Naive thymus-derived CD4-positive, alpha-beta T cell (primary cell): ENCODE measurements at regions of chr15 and their contacts with region 1.

Region 1: GRCh38 chr15:44219073-44219472 is 24.0 kb upstream of the FRMD5 start:
- DNase-seq: no peak
- ATAC-seq: no peak
- H3K4me3 ChIP-seq: no peak overlapping the region
- H3K4me3 Mint-ChIP-seq: no peak overlapping the region
- H3K27ac ChIP-seq: no peak overlapping the region
- H3K27ac Mint-ChIP-seq: no peak overlapping the region
- H3K4me1 ChIP-seq: no peaks in the 10 kb centered on the region
- H3K4me1 Mint-ChIP-seq: peaks cover 0 to 5% (median 3%) of the 10 kb centered on the region in 7 donors
- H3K27me3 ChIP-seq: no peaks in the 10 kb centered on the region
- H3K27me3 Mint-ChIP-seq: peaks cover 13 to 27% (median 22%) of the 10 kb centered on the region in 5 donors

Region 2: DNA sequence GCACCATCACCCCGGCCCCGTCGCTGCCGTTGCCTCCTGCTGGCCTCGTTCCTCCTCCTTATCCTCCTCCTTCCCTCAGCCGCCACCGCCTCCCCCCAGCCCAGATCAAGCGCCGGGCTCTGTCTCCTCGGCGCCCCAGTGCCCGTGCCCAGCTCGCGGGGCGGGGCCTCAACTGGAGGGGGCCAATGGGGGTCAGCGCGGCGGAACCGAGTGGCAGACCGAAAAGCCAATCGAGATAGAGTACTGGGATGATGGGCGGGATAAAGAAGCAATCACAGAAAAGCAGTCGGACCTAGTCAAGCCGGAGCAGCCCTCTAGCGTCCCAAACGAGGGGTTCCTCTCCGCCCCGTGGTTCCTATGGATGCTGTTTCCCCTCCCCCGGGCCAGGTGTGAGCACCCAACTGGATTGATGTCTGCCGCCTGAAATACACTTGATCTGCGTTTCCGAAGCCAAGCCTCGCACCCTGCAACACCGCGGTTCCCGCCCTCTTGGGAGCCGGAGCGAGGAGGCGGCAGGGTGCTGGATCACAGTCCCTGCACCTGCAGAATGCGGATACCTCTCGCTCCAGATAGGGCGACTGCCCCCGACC is 23.8 kb before region 1 on chr15 and contains the start of gene FRMD5:
- CTCF ChIA-PET with region 1: no interaction called
- POLR2A ChIA-PET with region 1: interaction called, 4 read pairs
- intact Hi-C with region 1: loop called in 1 of 2 experiments (anchors 2 kb)
- DNase-seq: peak; percentile 70 to 90 (median 85)
- ATAC-seq: peak; percentile 98
- H3K4me3 ChIP-seq: peak within 1 kb of the TSS; percentile 67
- H3K4me3 Mint-ChIP-seq: peak within 1 kb of the TSS; percentile 76 to 94 (median 90)
- H3K27ac ChIP-seq: no peak within 1 kb of the TSS
- H3K27ac Mint-ChIP-seq: peak within 1 kb of the TSS in 4 of 9 donors; percentile 10 to 43 (median 38)
- H3K4me1 ChIP-seq: peaks cover 4 to 11% of the 10 kb centered on the region in 2 donors
- H3K4me1 Mint-ChIP-seq: peaks cover 6 to 26% (median 18%) of the 10 kb centered on the region in 7 donors
- H3K27me3 ChIP-seq: peaks cover 4 to 9% of the 10 kb centered on the region in 2 donors
- H3K27me3 Mint-ChIP-seq: peaks cover 62 to 77% (median 72%) of the 10 kb centered on the region in 5 donors
- total RNA-seq, gene FRMD5: 0.35 TPM in 1 of 5 experiments, not detected in the others